PC-9 (cell line): ENCODE measurements at regions of chr10 and their contacts with region 1.

Region 1: GRCh38 chr10:58023341-58024073 is 244.2 kb downstream of the IPMK start:
- DNase-seq: peak; percentile 5 to 71
- H3K4me3 ChIP-seq: no peak overlapping the region
- H3K27ac ChIP-seq: peak overlapping the region; percentile 46
- H3K4me1 ChIP-seq: 0 out of 2 replicates have a peak, but pooled peaks cover 5% of the 10 kb centered on the region
- H3K27me3 ChIP-seq: no peaks in the 10 kb centered on the region
- CTCF ChIP-seq: no peak

Region 2: DNA sequence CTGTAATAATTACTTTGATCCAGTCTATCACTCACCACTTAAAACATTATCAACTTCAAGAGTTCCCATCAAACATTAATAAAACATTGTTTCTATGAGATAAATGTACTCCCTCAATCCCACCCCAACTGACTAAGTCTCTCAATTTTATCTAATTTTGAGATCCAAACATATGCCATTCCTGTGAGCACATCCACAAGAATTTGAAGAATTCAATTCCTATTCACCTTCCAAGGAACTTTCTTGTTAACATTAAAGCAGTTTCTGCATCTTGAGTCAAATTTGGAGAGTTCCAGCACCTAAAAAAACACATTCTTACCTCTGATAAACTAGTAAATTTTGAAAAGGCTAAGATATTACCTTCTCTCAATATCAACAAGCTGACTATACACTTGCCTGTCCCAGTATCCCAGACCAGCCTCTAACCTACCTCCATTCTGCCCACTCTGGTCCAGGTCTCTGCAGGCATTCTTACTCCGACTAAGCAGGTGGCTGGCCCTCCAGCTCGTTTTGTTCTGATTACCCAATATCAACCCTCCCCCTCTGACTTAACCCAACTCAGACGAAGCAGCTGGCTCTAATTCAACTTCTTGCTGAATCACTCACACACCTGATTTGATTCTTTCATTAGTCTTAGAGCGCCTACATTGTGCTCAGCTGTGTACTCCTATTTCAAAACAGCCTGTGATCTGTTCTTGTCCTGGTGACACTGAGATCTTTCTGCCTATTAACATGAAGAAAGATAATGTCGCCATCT is 31.0 kb before region 1 on chr10:
- CTCF ChIA-PET with region 1: no interaction called
- POLR2A ChIA-PET with region 1: no interaction called
- intact Hi-C with region 1: loop called (anchors 2 kb)
- DNase-seq: peak; percentile 41 to 43
- H3K4me3 ChIP-seq: no peak overlapping the region
- H3K27ac ChIP-seq: no peak overlapping the region
- H3K4me1 ChIP-seq: 0 out of 2 replicates have a peak, but pooled peaks cover 9% of the 10 kb centered on the region
- H3K27me3 ChIP-seq: no peaks in the 10 kb centered on the region
- CTCF ChIP-seq: no peak